IMR-90 (cell line): ENCODE measurements at regions of chr21 and their contacts with region 1.

Region 1: DNA sequence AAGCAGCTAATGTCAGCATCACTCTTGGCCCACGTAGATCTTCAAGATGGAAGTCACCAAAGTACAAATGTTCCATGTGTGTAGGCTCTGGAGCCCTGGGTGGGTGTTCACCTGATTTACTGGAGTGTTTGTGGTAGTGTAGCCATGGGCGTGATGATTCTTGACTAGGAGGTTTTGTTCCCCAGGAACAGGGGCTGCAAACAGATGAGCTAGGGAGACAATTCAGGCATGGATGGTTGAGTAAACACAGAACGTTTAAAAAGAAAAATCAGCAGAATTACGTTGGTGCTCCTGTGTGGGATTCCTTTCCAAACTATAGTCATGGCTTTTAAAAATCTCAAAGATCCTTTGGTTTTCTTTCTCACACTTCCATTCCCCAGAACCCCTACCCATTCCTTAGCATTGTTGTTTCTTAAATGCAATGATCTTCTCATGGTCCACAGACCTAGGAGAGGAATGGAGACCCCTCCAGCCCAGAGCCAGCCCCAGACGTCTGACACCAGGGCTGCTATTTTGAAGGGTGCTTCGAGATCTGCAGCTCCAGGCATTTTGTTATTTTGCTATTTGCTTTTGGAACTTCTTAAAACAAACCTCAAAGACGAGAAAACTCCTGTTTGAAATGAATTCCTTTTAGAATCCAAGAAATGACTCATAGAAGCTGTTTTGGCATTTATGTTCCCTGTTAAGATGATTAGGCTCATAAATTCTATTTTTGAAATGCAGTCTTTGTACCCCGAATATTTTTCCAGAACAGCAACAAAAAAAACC is 115.1 kb downstream of the ETS2 start:
- DNase-seq: peak; percentile 72
- ATAC-seq: peak; percentile 62
- H3K4me3 ChIP-seq: peak overlapping the region; percentile 7; the same call in 1 of the 2 replicates
- H3K27ac ChIP-seq: peak overlapping the region; percentile 67; the same call in 1 of the 2 replicates
- H3K4me1 ChIP-seq: peaks cover 9% of the 10 kb centered on the region
- H3K27me3 ChIP-seq: no peaks in the 10 kb centered on the region
- CTCF ChIP-seq: no peak
- POLR2A ChIP-seq: no peak
- RAD21 ChIP-seq: no peak

Region 2: DNA sequence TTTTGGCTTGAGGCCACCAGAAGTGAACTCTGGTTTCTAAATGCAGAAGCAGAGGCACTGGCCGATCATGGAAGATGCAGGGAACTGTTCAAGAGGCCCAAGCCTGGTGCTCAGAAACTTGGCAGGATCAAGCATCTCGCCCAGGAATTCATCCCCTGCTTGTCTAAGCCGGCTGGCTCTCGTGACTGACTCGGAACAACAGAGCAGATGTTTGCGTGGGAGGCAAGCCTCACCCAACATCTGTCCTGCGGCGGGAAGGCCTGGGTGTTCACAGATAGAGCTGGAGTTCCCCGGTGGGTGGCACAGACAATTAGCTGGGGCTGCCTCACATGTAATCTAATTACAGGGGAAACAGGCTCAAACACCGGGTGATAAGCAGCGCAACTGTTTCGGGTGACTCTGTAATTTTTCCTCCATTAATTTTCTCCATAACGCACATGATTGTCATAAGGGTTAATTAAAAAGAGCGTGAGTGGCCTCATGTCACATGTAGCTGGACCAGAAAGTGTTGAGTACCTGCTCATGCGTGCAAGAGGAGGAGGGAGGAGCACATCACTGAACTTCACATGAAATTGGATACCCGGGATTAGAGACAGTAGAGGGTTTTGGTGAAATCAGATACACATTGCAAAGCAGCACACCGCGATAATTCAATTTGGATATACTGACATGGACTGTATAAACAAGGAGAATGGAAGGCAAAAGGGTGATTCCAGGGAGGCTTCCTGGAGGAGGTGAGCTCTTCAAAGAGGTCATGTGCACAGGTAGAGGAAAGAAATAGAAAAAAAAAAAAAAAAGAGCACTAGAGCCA is 65.0 kb after region 1 on chr21:
- CTCF ChIA-PET with region 1: no interaction called
- POLR2A ChIA-PET with region 1: no interaction called
- dilution Hi-C with region 1: no loop called
- in situ Hi-C with region 1: no loop called
- intact Hi-C with region 1: loop called (anchors 5 kb)
- DNase-seq: peak; percentile 93
- ATAC-seq: peak; percentile 73
- H3K4me3 ChIP-seq: no peak overlapping the region
- H3K27ac ChIP-seq: peak overlapping the region; percentile 78
- H3K4me1 ChIP-seq: peaks cover 34% of the 10 kb centered on the region
- H3K27me3 ChIP-seq: no peaks in the 10 kb centered on the region
- CTCF ChIP-seq: no peak
- POLR2A ChIP-seq: no peak
- RAD21 ChIP-seq: no peak